Heart right ventricle (tissue), 16 donors: ENCODE measurements at regions of chr17 and their contacts with region 1.

Region 1: GRCh38 chr17:41648411-41649195 is 24.2 kb upstream of the KRT17 start:
- DNase-seq: peak; percentile 84 to 90
- ATAC-seq: peak; percentile 91 to 98 (median 96)
- H3K4me3 ChIP-seq: peak overlapping the region in 9 of 10 donors; percentile 14 to 52 (median 43)
- H3K27ac ChIP-seq: peak overlapping the region in 4 of 10 donors; percentile 11 to 40 (median 24)
- H3K4me1 ChIP-seq: peaks cover 0 to 30% (median 11%) of the 10 kb centered on the region in 9 donors
- H3K27me3 ChIP-seq: peaks cover 0 to 7% (median 0%) of the 10 kb centered on the region in 7 donors
- CTCF ChIP-seq: peak; percentile 90 to 98 (median 94)

Region 2: GRCh38 chr17:40803617-40804082 is 845.0 kb before region 1 on chr17:
- intact Hi-C with region 1: loop called in 2 of 10 experiments (anchors 5 kb)
- DNase-seq: peak; percentile 71 to 74
- ATAC-seq: peak in 7 of 8 donors; percentile 67 to 94 (median 82)
- H3K4me3 ChIP-seq: no peak overlapping the region
- H3K27ac ChIP-seq: no peak overlapping the region
- H3K4me1 ChIP-seq: peaks cover 0 to 8% (median 3%) of the 10 kb centered on the region in 9 donors
- H3K27me3 ChIP-seq: peaks cover 0 to 78% (median 20%) of the 10 kb centered on the region in 7 donors
- CTCF ChIP-seq: peak; percentile 49 to 92 (median 83)

Region 3: GRCh38 chr17:40854159-40854814 is 794.3 kb before region 1 on chr17:
- intact Hi-C with region 1: loop called in 3 of 10 experiments (anchors 5 kb)
- DNase-seq: no peak
- ATAC-seq: peak in 1 of 8 donors; percentile 62
- H3K4me3 ChIP-seq: no peak overlapping the region
- H3K27ac ChIP-seq: no peak overlapping the region
- H3K4me1 ChIP-seq: peaks cover 0 to 14% (median 0%) of the 10 kb centered on the region in 9 donors
- H3K27me3 ChIP-seq: peaks cover 0 to 16% (median 0%) of the 10 kb centered on the region in 7 donors
- CTCF ChIP-seq: no peak

Region 4: DNA sequence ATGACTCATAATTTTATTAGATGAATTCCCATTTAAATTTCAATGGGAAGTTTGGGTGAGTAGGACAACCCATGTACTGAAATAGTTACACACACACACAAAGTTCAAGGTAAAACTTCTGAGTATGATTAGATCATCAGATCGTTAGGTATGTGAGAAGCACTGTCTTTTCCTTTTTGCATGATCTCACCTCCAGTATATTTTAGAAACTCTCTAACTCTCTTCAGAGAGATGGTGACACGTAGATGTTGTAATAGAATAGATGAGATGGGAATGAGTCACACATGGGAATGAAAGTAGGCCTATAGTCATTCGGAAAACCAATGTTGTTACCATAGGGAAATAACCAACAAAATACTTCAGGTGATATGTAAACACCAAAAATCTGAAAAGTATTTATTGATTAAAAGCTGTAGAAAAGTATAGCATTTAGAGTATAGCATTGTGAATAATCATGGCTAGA is 733.4 kb before region 1 on chr17:
- intact Hi-C with region 1: loop called in 1 of 10 experiments (anchors 10 kb)
- DNase-seq: no peak
- ATAC-seq: no peak
- H3K4me3 ChIP-seq: no peak overlapping the region
- H3K27ac ChIP-seq: no peak overlapping the region
- H3K4me1 ChIP-seq: peaks cover 0 to 35% (median 0%) of the 10 kb centered on the region in 9 donors
- H3K27me3 ChIP-seq: peaks cover 0 to 7% (median 0%) of the 10 kb centered on the region in 7 donors
- CTCF ChIP-seq: no peak

Region 5: DNA sequence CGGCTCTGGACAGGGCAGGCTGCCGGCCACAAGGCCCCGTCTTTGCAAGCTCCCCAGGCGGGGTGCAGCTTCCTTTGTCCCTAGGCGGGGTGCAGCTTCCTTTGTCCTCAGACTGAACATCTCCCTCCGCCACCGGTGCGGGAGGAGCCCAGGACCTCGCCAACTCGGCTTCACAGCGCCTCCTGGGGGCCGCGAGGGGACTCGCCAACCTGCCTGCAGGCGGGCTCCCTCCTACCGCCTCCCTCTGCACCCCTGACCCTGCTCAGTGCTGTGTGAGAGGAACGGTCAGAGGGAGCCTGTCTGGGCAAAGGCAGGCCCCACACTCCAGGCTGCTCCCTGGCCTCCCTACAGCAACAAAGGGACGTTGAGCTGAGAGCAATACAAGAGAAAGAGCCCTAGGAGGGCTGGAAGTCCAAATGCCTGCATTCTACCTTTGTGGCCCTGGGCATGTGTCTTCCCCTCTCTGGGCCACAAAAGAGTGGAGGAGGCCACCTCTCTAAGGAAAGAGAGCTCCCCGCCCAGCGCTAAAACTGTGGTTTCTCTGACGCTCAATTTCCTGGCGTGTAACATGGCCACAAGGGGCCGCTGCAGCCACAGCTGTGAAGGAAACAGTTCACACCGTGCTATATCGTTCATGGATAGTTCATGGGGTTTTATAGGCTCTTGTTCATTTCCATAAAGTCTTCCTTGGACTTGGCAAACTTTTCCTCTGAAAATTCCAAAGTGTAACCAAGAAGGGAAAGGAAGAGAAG is 99.6 kb before region 1 on chr17:
- intact Hi-C with region 1: loop called (anchors 1 to 5 kb)
- DNase-seq: peak; percentile 75 to 79
- ATAC-seq: peak; percentile 87 to 95 (median 92)
- H3K4me3 ChIP-seq: peak overlapping the region in 9 of 10 donors; percentile 10 to 39 (median 30)
- H3K27ac ChIP-seq: peak overlapping the region in 2 of 10 donors; percentile 25 to 54
- H3K4me1 ChIP-seq: peaks cover 0 to 22% (median 16%) of the 10 kb centered on the region in 9 donors
- H3K27me3 ChIP-seq: peaks cover 0 to 38% (median 8%) of the 10 kb centered on the region in 7 donors
- CTCF ChIP-seq: peak; percentile 77 to 91 (median 84)

Region 6: GRCh38 chr17:41579484-41580243 is 68.9 kb before region 1 on chr17:
- intact Hi-C with region 1: loop called in 5 of 10 experiments (anchors 1 to 10 kb)
- DNase-seq: peak; percentile 50 to 80
- ATAC-seq: peak; percentile 67 to 93 (median 88)
- H3K4me3 ChIP-seq: no peak overlapping the region
- H3K27ac ChIP-seq: no peak overlapping the region
- H3K4me1 ChIP-seq: no peaks in the 10 kb centered on the region
- H3K27me3 ChIP-seq: peaks cover 0 to 55% (median 37%) of the 10 kb centered on the region in 7 donors
- CTCF ChIP-seq: peak; percentile 42 to 84 (median 73)